ENCODE measurements at regions of chr13 and their contacts with region 1.

Region 1: GRCh38 chr13:32538621-32539246 is at the start of gene N4BP2L2:
- DNase-seq: peak; percentile 70 to 95 (median 90)
- ATAC-seq: peak; percentile 96
- H3K4me3 Mint-ChIP-seq: peak within 1 kb of the TSS; percentile 95 to 100 (median 97)
- H3K27ac Mint-ChIP-seq: peak within 1 kb of the TSS; percentile 98 to 100 (median 100)
- H3K4me1 Mint-ChIP-seq: peaks cover 18 to 52% (median 45%) of the 10 kb centered on the region in 4 donors
- H3K27me3 Mint-ChIP-seq: peaks cover 0 to 4% (median 0%) of the 10 kb centered on the region in 5 donors
- polyA plus RNA-seq, gene N4BP2L2: 126 to 186 (median 168) TPM

Region 2: GRCh38 chr13:32315238-32316027 is 223.3 kb before region 1 on chr13 and contains the starts of genes BRCA2 and ZAR1L:
- POLR2A ChIA-PET with region 1: interaction called, 14 read pairs
- DNase-seq: peak; percentile 80 to 93 (median 86)
- ATAC-seq: peak; percentile 93 to 96
- H3K4me3 Mint-ChIP-seq: peak within 1 kb of the TSS; percentile 90 to 100 (median 96)
- H3K27ac Mint-ChIP-seq: peak within 1 kb of the TSS; percentile 98 to 100 (median 100)
- H3K4me1 Mint-ChIP-seq: peaks cover 4 to 16% (median 9%) of the 10 kb centered on the region in 4 donors
- H3K27me3 Mint-ChIP-seq: no peaks in the 10 kb centered on the region
- polyA plus RNA-seq, gene BRCA2: 0.59 to 1.2 (median 1.0) TPM
- polyA plus RNA-seq, gene ZAR1L: not detected

Region 3: DNA sequence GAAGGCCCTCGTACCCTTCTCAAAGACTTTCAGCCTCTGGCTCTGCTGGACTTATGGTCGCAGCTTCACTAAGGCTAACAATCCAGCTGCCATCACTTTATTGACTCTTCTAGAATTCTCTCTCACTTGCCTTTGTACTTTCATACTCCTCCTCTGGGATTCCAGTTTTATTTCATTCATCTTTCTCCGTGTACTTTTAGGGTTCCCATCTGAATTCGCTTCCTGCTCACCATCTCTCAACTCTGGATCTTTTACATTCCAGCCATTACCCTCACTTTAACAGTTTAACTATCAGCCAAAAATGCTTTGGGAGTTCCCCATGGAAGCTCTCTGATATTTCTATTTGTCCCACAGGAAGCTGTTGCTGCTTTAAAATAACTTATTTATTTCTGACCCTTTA is 328.2 kb after region 1 on chr13:
- POLR2A ChIA-PET with region 1: no interaction called
- DNase-seq: no peak
- ATAC-seq: no peak
- H3K4me3 Mint-ChIP-seq: no peak overlapping the region
- H3K27ac Mint-ChIP-seq: no peak overlapping the region
- H3K4me1 Mint-ChIP-seq: no peaks in the 10 kb centered on the region
- H3K27me3 Mint-ChIP-seq: no peaks in the 10 kb centered on the region

Measured in naive thymus-derived CD8-positive, alpha-beta T cell (primary cell).